ENCODE measurements at regions of chr13 and their contacts with region 1.

Region 1: GRCh38 chr13:73171926-73172325 is 113.1 kb downstream of the KLF5 start:
- DNase-seq: peak; percentile 59
- ATAC-seq: peak; percentile 73
- H3K4me3 ChIP-seq: peak overlapping the region; percentile 47
- H3K27ac ChIP-seq: peak overlapping the region; percentile 100
- H3K4me1 ChIP-seq: peaks cover 62% of the 10 kb centered on the region
- H3K27me3 ChIP-seq: no peaks in the 10 kb centered on the region
- CTCF ChIP-seq: no peak

Region 2: DNA sequence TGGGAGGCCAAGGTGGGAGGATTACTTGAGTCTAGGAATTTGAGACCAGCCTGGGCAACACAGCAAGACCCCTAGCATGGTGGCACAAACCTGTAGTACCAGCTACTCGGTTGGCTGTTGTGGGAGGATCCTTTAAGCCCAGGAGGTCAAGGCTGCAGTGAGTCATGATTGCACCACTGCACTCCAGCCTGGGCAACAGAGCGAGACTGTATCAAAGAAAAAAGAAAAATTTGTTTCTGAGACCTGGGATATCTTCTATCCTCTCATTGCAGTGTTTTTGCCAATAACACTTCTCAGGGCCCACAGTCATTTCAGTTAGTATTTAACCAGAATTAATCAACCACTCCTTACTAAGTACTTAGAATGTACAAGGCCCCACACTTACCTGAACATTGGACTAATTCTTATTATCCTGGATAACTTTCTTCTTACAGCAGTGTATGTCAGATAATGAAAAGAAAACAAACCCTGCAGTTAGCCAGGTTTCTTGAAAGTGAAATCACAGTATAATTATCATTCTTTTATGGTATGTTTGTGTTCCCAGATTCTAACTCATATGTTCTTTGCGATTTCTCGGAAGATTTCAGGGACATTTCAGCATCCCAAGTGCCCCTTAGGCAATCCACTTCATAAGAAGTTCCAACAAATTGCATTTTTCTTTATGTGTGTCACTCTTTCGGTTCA is 188.7 kb before region 1 on chr13:
- CTCF ChIA-PET with region 1: no interaction called
- POLR2A ChIA-PET with region 1: interaction called, 17 read pairs
- intact Hi-C with region 1: no loop called
- DNase-seq: no peak
- ATAC-seq: no peak
- H3K4me3 ChIP-seq: no peak overlapping the region
- H3K27ac ChIP-seq: no peak overlapping the region
- H3K4me1 ChIP-seq: peaks cover 5% of the 10 kb centered on the region; the same call in 1 of the 2 replicates
- H3K27me3 ChIP-seq: no peaks in the 10 kb centered on the region
- CTCF ChIP-seq: no peak

Region 3: DNA sequence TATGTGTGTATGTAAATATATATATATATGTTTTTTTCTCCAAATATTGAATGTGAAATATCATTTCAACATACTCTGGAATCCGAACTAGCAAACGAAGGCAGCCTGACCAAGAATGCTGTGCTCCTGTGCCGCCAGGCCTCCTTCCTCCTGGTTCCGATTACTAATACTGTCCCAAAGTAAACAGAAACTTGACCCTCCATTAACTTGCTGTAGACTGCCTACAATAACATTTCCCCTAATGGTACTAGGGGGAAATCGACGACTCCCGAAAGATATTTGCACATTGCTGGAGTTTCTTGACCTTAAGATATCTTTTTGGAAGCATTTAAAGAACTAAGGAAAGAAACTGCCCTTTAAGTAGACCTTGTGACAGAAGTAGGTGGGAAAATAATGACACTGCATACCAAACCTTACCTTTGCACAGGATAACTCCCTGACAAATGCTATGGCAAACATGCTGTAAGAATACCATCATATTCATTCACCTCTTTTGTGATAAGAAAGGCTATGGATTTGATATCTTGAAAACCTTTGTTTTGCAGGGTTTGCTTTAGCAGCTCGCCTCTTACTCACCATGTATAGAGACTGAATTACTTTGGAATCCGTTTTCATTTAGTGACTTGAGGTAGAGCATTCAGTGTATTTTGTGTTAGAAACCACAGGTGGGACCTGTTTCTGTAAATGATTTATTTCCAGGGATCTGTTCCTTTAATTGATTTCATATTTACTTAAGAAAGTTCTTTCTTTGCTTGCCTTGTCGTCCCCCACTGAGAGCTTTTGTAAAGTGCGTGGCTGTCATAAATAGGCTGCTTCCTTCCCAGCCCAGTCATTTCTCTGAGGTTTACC is 33.1 kb before region 1 on chr13:
- CTCF ChIA-PET with region 1: no interaction called
- POLR2A ChIA-PET with region 1: no interaction called
- intact Hi-C with region 1: loop called (anchors 1 kb)
- DNase-seq: peak; percentile 83
- ATAC-seq: peak; percentile 90
- H3K4me3 ChIP-seq: peak overlapping the region; percentile 47; the same call in 1 of the 2 replicates
- H3K27ac ChIP-seq: peak overlapping the region; percentile 94
- H3K4me1 ChIP-seq: peaks cover 52% of the 10 kb centered on the region
- H3K27me3 ChIP-seq: no peaks in the 10 kb centered on the region
- CTCF ChIP-seq: no peak

Region 4: GRCh38 chr13:73335221-73335620 is 163.3 kb after region 1 on chr13:
- CTCF ChIA-PET with region 1: no interaction called
- POLR2A ChIA-PET with region 1: no interaction called
- intact Hi-C with region 1: loop called (anchors 2 kb)
- DNase-seq: peak; percentile 90
- ATAC-seq: peak; percentile 60
- H3K4me3 ChIP-seq: no peak overlapping the region
- H3K27ac ChIP-seq: peak overlapping the region; percentile 100
- H3K4me1 ChIP-seq: peaks cover 60% of the 10 kb centered on the region
- H3K27me3 ChIP-seq: no peaks in the 10 kb centered on the region
- CTCF ChIP-seq: no peak

Region 5: DNA sequence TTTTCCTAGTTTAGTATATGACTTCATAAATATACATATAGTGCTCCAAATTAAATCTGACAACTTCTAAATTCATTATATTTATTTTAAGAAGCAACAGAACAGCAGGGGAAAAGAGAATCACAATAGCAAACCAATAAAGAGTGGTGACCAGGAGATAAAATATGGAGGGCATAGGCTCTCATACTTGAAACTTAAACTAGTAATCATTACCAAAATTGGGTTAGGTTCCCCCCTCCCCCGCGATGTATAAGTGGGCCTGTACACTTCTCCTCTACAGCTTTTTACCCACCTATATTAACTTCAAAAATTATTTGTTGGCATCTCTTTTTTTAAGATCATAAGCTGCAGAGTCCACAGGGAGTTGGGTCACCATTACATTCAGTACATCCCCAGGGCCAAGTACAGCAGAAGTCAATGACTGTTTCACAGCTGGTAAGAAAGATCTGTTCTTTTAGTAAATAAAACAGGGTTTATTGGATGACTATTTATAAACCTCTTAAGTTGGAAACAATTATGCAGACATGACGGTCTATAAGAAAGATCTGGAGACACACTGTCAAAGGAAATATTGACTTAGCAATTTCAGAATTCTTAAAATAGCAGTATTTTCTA is 932.8 kb after region 1 on chr13:
- CTCF ChIA-PET with region 1: no interaction called
- POLR2A ChIA-PET with region 1: no interaction called
- intact Hi-C with region 1: loop called (anchors 10 kb)
- DNase-seq: no peak
- ATAC-seq: peak; percentile 38; the same call in 1 of the 2 replicates
- H3K4me3 ChIP-seq: no peak overlapping the region
- H3K27ac ChIP-seq: no peak overlapping the region
- H3K4me1 ChIP-seq: peaks cover 2% of the 10 kb centered on the region
- H3K27me3 ChIP-seq: no peaks in the 10 kb centered on the region
- CTCF ChIP-seq: no peak

Measured in PC-3 (cell line).